AG04449 (cell line): ENCODE measurements at regions of chr3 and their contacts with region 1.

Region 1: DNA sequence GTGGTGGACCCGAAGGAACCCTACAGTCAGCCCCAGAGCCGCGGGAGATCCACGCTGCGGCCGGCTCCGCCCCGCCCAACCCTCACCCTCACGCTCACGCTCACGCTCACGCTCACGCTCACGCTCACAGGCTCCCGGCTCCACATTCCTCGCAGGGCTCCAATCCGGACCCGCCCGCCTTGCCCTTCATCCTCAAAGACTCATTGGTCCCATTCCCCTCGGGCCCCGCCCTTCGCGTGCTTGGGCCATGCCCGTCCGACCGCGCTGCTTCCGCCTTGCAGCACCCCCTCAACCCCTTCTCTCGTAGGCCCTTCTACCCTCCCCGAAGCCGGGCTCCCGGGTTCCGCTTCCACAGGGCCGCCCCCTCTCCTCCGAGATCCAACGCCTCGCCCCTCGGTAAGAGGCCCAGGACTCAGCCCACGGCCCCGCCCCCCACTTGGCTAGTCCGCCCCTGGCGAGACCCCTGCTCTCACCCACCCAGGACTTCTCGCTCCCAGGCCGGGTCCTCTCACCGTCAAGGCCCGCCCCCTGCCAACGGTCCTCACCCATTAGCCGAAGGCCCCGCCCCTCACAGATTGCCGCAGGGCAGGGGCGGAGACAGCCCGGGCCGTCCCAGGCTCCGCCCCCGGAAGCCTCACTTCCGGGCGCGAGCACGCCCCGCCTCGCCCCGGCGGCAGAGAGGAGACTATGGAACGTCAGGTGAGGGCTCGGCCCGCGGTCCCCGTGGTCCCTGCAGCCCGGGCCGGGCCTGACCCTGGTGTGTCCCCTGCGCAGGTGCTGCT is at the start of gene APEH:
- DNase-seq: peak; percentile 78
- H3K4me3 ChIP-seq: peak within 1 kb of the TSS; percentile 83
- CTCF ChIP-seq: no peak

Region 2: GRCh38 chr3:49469936-49470713 is 203.8 kb before region 1 on chr3 and contains the start of gene DAG1:
- CTCF ChIA-PET with region 1: interaction called, 15 read pairs
- POLR2A ChIA-PET with region 1: no interaction called
- DNase-seq: no peak
- H3K4me3 ChIP-seq: peak within 1 kb of the TSS; percentile 72
- CTCF ChIP-seq: no peak

Region 3: DNA sequence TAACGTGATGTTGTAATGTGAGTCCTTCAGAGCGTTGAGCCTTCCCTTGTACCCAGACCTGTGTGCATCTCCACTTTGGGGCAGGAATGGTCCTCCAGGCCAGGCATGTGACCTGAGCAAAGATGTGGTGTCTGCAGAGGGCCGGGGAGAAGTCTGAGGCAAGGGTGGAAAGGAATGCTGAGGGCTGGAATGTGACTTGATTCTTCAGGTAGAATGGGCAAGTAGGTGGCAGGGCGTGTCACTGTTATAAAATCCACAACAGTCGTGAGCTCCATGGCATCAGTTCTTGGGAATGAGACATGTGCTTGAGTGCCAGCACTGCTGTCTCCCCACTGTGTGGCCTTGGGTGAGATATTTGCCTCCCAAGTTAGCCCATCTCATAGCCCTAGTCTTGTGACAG is 143.7 kb before region 1 on chr3:
- CTCF ChIA-PET with region 1: interaction called, 441 read pairs
- POLR2A ChIA-PET with region 1: no interaction called
- DNase-seq: no peak
- H3K4me3 ChIP-seq: no peak overlapping the region
- CTCF ChIP-seq: no peak

Region 4: DNA sequence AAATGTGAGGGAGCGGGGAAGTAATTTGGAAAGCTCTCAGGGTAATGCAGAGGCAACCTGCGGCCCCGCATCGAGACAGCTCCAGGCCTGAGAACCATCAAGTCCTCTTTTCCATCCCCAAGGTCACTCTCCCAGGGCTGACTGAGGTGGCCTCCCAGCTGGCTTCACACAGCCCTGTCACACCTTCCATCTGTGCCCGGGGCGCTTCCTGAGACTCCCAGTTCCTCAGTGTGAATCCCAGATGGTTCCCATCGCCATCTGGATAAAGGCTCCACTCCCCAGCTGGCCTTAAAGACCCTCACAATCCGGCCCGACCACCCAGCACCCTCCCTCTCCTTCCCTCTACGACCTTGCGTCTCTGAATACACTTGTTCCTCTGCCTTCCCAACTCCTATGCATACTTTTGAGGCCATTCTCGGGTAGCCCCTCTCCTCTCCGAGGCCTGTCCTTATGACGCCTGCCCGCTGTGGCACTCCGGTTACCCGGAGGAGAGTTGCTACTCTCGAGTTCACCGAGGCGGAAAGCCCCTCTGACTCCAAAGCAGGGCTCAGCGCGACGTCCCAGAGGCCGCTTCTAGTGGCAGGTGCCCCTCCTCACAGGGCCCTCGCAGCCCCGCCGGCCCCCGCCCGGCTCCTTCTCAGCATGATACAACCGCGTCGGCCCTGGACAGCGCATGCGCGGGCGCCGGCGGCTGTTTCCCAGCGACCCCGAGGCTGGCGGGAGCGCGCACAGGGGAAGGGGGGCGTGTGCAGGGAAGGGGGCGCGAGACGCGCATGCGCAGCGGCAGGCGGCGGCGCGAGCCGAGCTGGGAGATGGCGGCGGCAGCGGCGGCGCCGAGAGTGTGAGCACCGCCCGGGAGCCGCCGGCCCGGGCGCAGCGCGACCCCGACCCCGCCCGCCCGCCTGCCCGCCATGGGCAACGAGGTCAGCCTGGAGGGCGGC is 119.9 kb before region 1 on chr3 and contains the start of gene BSN:
- CTCF ChIA-PET with region 1: interaction called, 34 read pairs
- POLR2A ChIA-PET with region 1: no interaction called
- DNase-seq: peak; percentile 9
- H3K4me3 ChIP-seq: peak within 1 kb of the TSS; percentile 77
- CTCF ChIP-seq: no peak

Region 5: DNA sequence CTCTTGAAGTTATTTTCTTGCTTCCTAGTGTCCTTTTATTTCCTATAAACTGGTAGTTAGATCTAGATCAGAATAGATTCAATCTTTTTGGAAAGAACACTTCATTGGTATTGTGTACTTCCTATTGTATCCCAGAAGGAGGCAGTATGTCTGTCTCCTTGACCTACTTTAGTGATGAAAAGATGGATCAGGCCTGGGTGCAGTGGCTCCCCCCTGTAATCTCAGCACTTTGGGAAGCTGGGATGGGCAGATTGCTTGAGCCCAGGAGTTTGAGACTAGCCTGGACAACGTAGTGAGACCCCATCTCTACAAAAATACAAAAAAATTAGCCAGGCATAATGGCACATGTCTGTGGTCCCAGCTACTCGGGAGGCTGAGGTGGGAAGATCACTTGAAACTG is 107.6 kb before region 1 on chr3:
- CTCF ChIA-PET with region 1: interaction called, 29 read pairs
- POLR2A ChIA-PET with region 1: no interaction called
- DNase-seq: no peak
- H3K4me3 ChIP-seq: no peak overlapping the region
- CTCF ChIP-seq: no peak

Region 6: GRCh38 chr3:49647741-49648140 is 26.2 kb before region 1 on chr3:
- CTCF ChIA-PET with region 1: interaction called, 13 read pairs
- POLR2A ChIA-PET with region 1: no interaction called
- DNase-seq: no peak
- H3K4me3 ChIP-seq: no peak overlapping the region
- CTCF ChIP-seq: no peak

Region 7: DNA sequence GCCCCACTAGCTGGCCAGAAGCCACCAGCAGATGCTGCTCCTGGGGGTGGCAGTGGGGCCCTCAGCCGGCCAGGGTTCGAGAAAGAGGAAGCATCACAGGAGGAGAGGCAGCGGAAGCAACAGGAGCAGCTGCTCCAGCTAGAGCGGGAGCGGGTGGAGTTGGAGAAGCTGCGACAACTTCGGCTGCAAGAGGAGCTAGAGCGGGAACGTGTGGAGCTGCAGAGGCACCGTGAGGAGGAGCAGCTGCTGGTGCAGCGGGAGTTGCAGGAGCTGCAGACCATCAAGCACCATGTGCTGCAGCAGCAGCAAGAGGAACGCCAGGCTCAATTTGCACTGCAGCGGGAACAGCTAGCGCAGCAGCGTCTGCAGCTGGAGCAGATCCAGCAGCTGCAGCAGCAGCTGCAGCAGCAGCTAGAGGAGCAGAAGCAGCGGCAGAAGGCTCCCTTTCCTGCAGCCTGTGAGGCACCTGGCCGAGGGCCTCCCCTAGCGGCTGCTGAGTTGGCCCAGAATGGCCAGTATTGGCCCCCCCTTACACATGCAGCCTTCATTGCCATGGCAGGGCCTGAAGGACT is 17.3 kb before region 1 on chr3:
- CTCF ChIA-PET with region 1: interaction called, 13 read pairs
- POLR2A ChIA-PET with region 1: no interaction called
- DNase-seq: no peak
- H3K4me3 ChIP-seq: no peak overlapping the region
- CTCF ChIP-seq: peak; percentile 59